B cell (primary cell): ENCODE measurements at regions of chr1 and their contacts with region 1.

Region 1: GRCh38 chr1:21782868-21783678 is at the start of gene USP48:
- DNase-seq: peak; percentile 98
- ATAC-seq: peak; percentile 81
- H3K4me3 ChIP-seq: peak within 1 kb of the TSS; percentile 86 to 100 (median 94)
- H3K4me3 Mint-ChIP-seq: peak within 1 kb of the TSS; percentile 95
- H3K27ac ChIP-seq: peak within 1 kb of the TSS; percentile 99 to 100
- H3K27ac Mint-ChIP-seq: peak within 1 kb of the TSS; percentile 100
- H3K4me1 ChIP-seq: peaks cover 23 to 43% of the 10 kb centered on the region in 2 donors
- H3K4me1 Mint-ChIP-seq: peaks cover 34% of the 10 kb centered on the region
- H3K27me3 ChIP-seq: no peaks in the 10 kb centered on the region
- H3K27me3 Mint-ChIP-seq: no peaks in the 10 kb centered on the region
- CTCF ChIP-seq: peak; percentile 4
- total RNA-seq, gene USP48: 135 and 142 TPM in 2 replicates

Region 2: DNA sequence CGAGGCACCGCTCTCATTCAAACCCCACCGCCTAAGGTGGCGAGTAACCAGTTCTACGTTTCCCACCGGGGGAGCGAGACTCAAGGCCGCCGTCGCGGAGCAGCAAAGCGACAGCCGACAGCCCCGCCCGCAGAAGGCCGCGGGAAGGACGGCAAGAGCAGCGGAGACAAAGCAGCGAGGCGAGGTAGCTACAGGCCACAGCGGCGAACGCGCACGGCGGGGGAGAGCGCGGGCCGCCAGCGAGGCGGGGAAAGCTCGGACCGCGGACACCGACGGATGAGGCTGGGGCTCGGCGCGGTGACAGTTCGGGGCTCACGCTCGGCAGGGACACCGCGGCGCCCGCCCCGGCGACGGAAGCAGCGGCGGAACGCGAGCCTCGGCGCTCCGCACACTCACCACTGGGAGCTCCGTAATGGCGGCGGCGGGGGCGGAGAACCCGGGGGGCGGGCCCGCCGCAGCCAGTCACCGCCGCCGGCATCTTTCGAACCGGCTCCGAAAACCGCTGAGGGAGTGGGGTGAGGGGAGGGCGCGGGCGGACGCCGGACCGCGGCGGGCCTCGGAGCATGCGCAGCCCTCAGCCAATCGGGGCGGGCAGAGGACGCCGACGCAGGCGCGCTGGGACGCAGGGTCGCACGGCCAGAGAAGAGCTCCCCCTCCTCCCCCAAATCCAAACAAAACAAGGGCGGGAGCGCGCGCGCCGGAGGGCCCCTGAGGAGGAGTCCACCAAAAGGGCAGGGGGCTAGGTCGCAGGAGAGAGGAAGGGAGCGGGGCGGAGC is 996.6 kb before region 1 on chr1:
- CTCF ChIA-PET with region 1: no interaction called
- POLR2A ChIA-PET with region 1: no interaction called
- intact Hi-C with region 1: loop called (anchors 5 kb)
- DNase-seq: peak; percentile 98
- ATAC-seq: peak; percentile 72
- H3K4me3 ChIP-seq: peak overlapping the region; percentile 78 to 92 (median 82)
- H3K4me3 Mint-ChIP-seq: peak overlapping the region; percentile 99
- H3K27ac ChIP-seq: peak overlapping the region; percentile 81 to 91
- H3K27ac Mint-ChIP-seq: peak overlapping the region; percentile 98
- H3K4me1 ChIP-seq: peaks cover 19 to 33% of the 10 kb centered on the region in 2 donors
- H3K4me1 Mint-ChIP-seq: peaks cover 39% of the 10 kb centered on the region
- H3K27me3 ChIP-seq: no peaks in the 10 kb centered on the region
- H3K27me3 Mint-ChIP-seq: no peaks in the 10 kb centered on the region
- CTCF ChIP-seq: no peak

Region 3: GRCh38 chr1:21703318-21703963 is 79.6 kb before region 1 on chr1:
- CTCF ChIA-PET with region 1: interaction called, 5 read pairs
- POLR2A ChIA-PET with region 1: no interaction called
- intact Hi-C with region 1: loop called (anchors 2 kb)
- DNase-seq: peak; percentile 32
- ATAC-seq: no peak
- H3K4me3 ChIP-seq: no peak overlapping the region
- H3K4me3 Mint-ChIP-seq: no peak overlapping the region
- H3K27ac ChIP-seq: no peak overlapping the region
- H3K27ac Mint-ChIP-seq: no peak overlapping the region
- H3K4me1 ChIP-seq: peaks cover 0 to 4% of the 10 kb centered on the region in 2 donors
- H3K4me1 Mint-ChIP-seq: peaks cover 11% of the 10 kb centered on the region
- H3K27me3 ChIP-seq: no peaks in the 10 kb centered on the region
- H3K27me3 Mint-ChIP-seq: no peaks in the 10 kb centered on the region
- CTCF ChIP-seq: peak; percentile 62

Region 4: GRCh38 chr1:21852282-21853128 is 69.4 kb after region 1 on chr1:
- CTCF ChIA-PET with region 1: no interaction called
- POLR2A ChIA-PET with region 1: no interaction called
- intact Hi-C with region 1: loop called (anchors 1 kb)
- DNase-seq: peak; percentile 65
- ATAC-seq: peak; percentile 91
- H3K4me3 ChIP-seq: no peak overlapping the region
- H3K4me3 Mint-ChIP-seq: peak overlapping the region; percentile 54
- H3K27ac ChIP-seq: peak overlapping the region in 1 of 2 donors; percentile 27
- H3K27ac Mint-ChIP-seq: peak overlapping the region; percentile 82
- H3K4me1 ChIP-seq: peaks cover 6 to 15% of the 10 kb centered on the region in 2 donors
- H3K4me1 Mint-ChIP-seq: peaks cover 13% of the 10 kb centered on the region
- H3K27me3 ChIP-seq: no peaks in the 10 kb centered on the region
- H3K27me3 Mint-ChIP-seq: no peaks in the 10 kb centered on the region
- CTCF ChIP-seq: no peak

Region 5: DNA sequence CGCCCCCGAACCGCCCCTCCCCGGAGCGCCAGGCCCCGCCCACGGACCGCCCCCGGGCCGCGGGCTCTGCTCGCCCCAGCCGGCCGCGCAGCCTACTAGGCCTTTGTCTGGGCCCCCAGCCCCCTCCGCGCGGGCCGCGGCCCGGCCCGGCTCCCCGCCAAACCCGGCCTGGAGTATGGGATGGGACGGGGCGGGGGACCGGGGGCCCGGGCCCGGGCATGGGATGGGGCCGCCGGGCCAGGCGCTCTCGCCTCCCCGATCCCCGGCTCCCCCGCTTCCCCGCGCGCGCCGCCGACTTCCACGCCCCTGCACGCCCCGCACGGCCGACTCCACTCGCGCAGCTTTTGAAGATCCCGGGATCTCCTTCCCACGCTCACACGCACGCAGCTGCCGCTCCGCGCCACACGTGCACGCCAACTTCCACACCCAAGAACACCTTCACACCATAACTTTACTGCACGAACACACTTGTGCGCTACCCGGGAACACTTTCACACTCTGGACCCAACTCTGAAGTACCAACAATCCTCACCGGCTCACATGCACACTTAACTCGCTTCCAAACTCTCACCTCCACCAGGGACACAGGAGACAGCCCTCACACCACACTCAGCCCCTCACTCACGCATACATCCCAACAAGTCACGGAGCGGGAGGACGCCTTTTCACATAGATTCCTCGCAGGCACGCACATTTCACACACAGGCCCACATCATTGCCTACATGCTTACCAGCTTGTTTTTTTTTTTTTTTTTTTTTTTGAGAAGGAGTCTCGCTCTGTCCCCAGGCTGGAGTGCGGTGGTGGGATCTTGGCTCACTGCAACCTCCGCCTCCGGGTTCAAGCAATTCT is 154.5 kb after region 1 on chr1:
- CTCF ChIA-PET with region 1: no interaction called
- POLR2A ChIA-PET with region 1: no interaction called
- intact Hi-C with region 1: loop called (anchors 5 kb)
- DNase-seq: peak; percentile 80
- ATAC-seq: peak; percentile 96
- H3K4me3 ChIP-seq: peak overlapping the region in 4 of 5 experiments; percentile 35 to 59 (median 52)
- H3K4me3 Mint-ChIP-seq: peak overlapping the region; percentile 95
- H3K27ac ChIP-seq: no peak overlapping the region
- H3K27ac Mint-ChIP-seq: peak overlapping the region; percentile 78
- H3K4me1 ChIP-seq: peaks cover 9 to 12% of the 10 kb centered on the region in 2 donors
- H3K4me1 Mint-ChIP-seq: peaks cover 15% of the 10 kb centered on the region
- H3K27me3 ChIP-seq: peaks cover 0 to 23% (median 6%) of the 10 kb centered on the region in 4 experiments
- H3K27me3 Mint-ChIP-seq: peaks cover 20% of the 10 kb centered on the region
- CTCF ChIP-seq: no peak

Region 6: GRCh38 chr1:22039594-22040285 is 256.7 kb after region 1 on chr1:
- CTCF ChIA-PET with region 1: no interaction called
- POLR2A ChIA-PET with region 1: interaction called, 7 read pairs
- intact Hi-C with region 1: loop called (anchors 1 kb)
- DNase-seq: peak; percentile 96
- ATAC-seq: peak; percentile 99
- H3K4me3 ChIP-seq: peak overlapping the region; percentile 30 to 71 (median 52)
- H3K4me3 Mint-ChIP-seq: peak overlapping the region; percentile 87
- H3K27ac ChIP-seq: peak overlapping the region; percentile 98
- H3K27ac Mint-ChIP-seq: peak overlapping the region; percentile 98
- H3K4me1 ChIP-seq: peaks cover 42 to 60% of the 10 kb centered on the region in 2 donors
- H3K4me1 Mint-ChIP-seq: peaks cover 41% of the 10 kb centered on the region
- H3K27me3 ChIP-seq: no peaks in the 10 kb centered on the region
- H3K27me3 Mint-ChIP-seq: no peaks in the 10 kb centered on the region
- CTCF ChIP-seq: peak; percentile 8

Region 7: GRCh38 chr1:22451702-22452474 is 668.8 kb after region 1 on chr1 and contains the start of gene ZBTB40:
- CTCF ChIA-PET with region 1: no interaction called
- POLR2A ChIA-PET with region 1: no interaction called
- intact Hi-C with region 1: loop called (anchors 5 kb)
- DNase-seq: peak; percentile 96
- ATAC-seq: peak; percentile 88
- H3K4me3 ChIP-seq: peak within 1 kb of the TSS; percentile 63 to 92 (median 72)
- H3K4me3 Mint-ChIP-seq: peak within 1 kb of the TSS; percentile 95
- H3K27ac ChIP-seq: peak within 1 kb of the TSS; percentile 73 to 93
- H3K27ac Mint-ChIP-seq: peak within 1 kb of the TSS; percentile 96
- H3K4me1 ChIP-seq: peaks cover 14 to 17% of the 10 kb centered on the region in 2 donors
- H3K4me1 Mint-ChIP-seq: peaks cover 37% of the 10 kb centered on the region
- H3K27me3 ChIP-seq: no peaks in the 10 kb centered on the region
- H3K27me3 Mint-ChIP-seq: no peaks in the 10 kb centered on the region
- CTCF ChIP-seq: no peak
- total RNA-seq, gene ZBTB40: 51.9 and 56.3 TPM in 2 replicates